Activated T-helper 2 cell treated with anti-CD3 and anti-CD28 coated beads, Interferon-gamma antibody, Interleukin-2, Interleukin-4, amounts not matched to agents 10 μg/mL and 5 μg/mL and 100 μg/mL, durations not matched to agents 14 hours and 24 hours and 36 hours (primary cell): ENCODE measurements at regions of chr14 and their contacts with region 1.

Region 1: DNA sequence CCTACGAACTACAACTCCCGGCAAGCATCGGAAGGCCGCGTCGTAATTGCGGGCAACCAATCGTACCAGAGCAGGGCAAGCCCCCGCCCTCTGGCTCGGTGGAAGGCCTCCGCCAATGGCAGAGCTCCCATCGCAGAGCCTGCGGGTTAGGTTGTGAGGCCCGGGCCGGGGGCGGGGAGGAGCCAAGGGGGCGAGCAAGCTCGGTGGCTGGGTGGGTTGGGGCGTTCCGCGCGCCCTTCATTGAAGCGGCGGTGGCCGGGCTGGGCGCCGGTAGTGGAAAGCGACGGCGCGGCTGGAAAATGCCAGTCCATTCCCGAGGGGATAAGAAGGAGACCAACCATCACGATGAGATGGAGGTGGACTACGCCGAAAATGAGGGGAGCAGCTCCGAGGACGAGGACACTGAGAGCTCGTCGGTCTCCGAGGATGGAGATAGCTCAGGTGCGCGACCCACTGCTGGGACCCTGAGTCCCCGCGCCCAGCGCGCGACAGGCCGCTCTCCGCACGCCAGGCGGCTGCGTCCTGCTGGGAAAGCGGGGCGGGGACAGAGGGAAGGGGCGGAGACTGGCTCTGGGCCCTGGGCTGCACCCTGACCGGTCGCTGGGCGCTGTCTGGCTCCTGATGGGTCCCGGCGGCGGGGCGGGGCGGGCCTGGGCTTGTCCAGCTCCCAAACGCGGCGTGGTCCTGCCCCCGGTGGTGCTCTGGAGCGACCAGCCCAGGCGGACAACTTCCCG is at the start of gene BRMS1L:
- DNase-seq: peak; percentile 96
- H3K4me3 Mint-ChIP-seq: peak within 1 kb of the TSS; percentile 84
- H3K27ac Mint-ChIP-seq: peak within 1 kb of the TSS; percentile 90
- H3K4me1 Mint-ChIP-seq: peaks cover 21% of the 10 kb centered on the region
- H3K27me3 Mint-ChIP-seq: no peaks in the 10 kb centered on the region
- total RNA-seq, gene BRMS1L: 5.3 and 6.1 TPM in 2 replicates

Region 2: GRCh38 chr14:35046048-35046741 is 780.2 kb before region 1 on chr14 and contains the start of gene FAM177A1:
- intact Hi-C with region 1: loop called (anchors 5 kb)
- DNase-seq: peak; percentile 97
- H3K4me3 Mint-ChIP-seq: peak within 1 kb of the TSS; percentile 98
- H3K27ac Mint-ChIP-seq: peak within 1 kb of the TSS; percentile 98
- H3K4me1 Mint-ChIP-seq: peaks cover 21% of the 10 kb centered on the region
- H3K27me3 Mint-ChIP-seq: no peaks in the 10 kb centered on the region
- total RNA-seq, gene FAM177A1: 41.3 and 43.2 TPM in 2 replicates

Region 3: GRCh38 chr14:35867273-35867629 is 40.9 kb after region 1 on chr14:
- intact Hi-C with region 1: no loop called
- DNase-seq: no peak
- H3K4me3 Mint-ChIP-seq: no peak overlapping the region
- H3K27ac Mint-ChIP-seq: no peak overlapping the region
- H3K4me1 Mint-ChIP-seq: no peaks in the 10 kb centered on the region
- H3K27me3 Mint-ChIP-seq: no peaks in the 10 kb centered on the region

Region 4: GRCh38 chr14:36320200-36320896 is 494.0 kb after region 1 on chr14 and contains the start of gene MBIP:
- intact Hi-C with region 1: loop called (anchors 5 kb)
- DNase-seq: peak; percentile 82
- H3K4me3 Mint-ChIP-seq: peak within 1 kb of the TSS; percentile 95
- H3K27ac Mint-ChIP-seq: peak within 1 kb of the TSS; percentile 89
- H3K4me1 Mint-ChIP-seq: peaks cover 30% of the 10 kb centered on the region
- H3K27me3 Mint-ChIP-seq: peaks cover 17% of the 10 kb centered on the region
- total RNA-seq, gene MBIP: 29.3 and 29.5 TPM in 2 replicates